Stomach (tissue), 19 donors: ENCODE measurements at regions of chr1 and their contacts with region 1.

Region 1: DNA sequence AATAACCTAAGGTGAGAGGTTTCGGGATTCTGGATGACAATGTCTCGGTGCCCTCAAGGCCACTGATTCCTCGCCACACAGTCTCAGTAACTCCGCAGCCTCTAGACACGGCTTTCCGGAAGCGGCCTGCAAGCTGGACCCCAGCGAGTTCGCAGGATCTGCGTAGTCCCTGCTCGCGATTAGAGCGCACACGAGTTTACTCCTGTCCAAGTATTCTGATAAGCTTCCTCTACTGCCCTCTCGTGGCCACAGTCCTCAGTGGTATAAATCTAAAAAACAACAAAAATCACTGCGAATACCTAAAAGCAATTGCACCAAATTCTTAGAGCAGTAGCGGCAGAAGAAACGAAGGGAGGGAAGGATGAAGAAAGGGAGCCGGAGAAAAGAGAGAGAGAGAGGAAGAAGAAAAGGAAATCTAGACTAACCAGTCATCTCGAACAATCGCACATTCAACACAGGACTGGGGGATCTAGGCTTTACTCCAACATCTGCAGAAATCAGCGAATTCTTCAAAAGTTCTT is 1.1 kb upstream of the PLXNA2 start:
- DNase-seq: peak; percentile 93 to 96
- H3K4me3 ChIP-seq: peak overlapping the region; percentile 78 to 90 (median 86)
- H3K27ac ChIP-seq: peak overlapping the region; percentile 53 to 97 (median 92)
- H3K4me1 ChIP-seq: peaks cover 39 to 59% (median 51%) of the 10 kb centered on the region in 4 donors
- H3K27me3 ChIP-seq: peaks cover 0 to 19% (median 0%) of the 10 kb centered on the region in 3 donors
- CTCF ChIP-seq: peak in 5 of 7 experiments; percentile 65 to 92 (median 83)
- EP300 ChIP-seq: no peak
- POLR2A ChIP-seq: no peak

Region 2: DNA sequence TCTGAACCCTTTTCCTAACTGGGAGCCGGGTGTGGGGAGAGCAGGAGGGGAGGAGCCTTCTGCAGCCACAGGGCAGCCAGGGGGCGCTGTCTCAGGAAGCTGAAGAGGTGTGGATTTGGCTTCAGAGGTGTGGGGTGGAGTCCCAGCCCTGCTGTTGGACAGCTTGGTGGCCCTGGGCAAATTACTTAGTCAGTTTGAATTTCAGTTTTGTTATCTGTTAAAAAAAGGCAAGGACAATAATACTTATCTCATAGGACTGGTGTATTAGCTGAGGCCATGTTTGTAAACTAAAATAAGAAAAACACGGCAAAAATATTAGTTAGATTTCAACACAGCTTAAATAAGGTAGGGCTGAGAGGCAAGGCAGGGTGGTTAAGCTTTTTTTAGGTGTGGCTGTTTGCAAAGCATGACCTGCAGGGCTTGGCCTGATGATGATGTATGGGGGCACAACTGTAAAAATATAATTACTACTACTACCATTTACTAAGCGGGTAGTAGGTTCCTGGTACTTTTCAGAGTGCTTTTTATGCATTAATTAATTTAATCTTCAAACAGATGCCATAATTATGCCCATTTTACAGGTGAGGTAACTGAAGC is 112.9 kb before region 1 on chr1:
- intact Hi-C with region 1: loop called (anchors 10 kb)
- DNase-seq: peak; percentile 91 to 92
- H3K4me3 ChIP-seq: no peak overlapping the region
- H3K27ac ChIP-seq: peak overlapping the region in 4 of 5 donors; percentile 21 to 68 (median 46)
- H3K4me1 ChIP-seq: peaks cover 17 to 58% (median 40%) of the 10 kb centered on the region in 4 donors
- H3K27me3 ChIP-seq: no peaks in the 10 kb centered on the region
- CTCF ChIP-seq: peak in 6 of 7 experiments; percentile 62 to 89 (median 84)
- EP300 ChIP-seq: no peak
- POLR2A ChIP-seq: no peak